AG04450 (cell line): ENCODE measurements at regions of chr9 and their contacts with region 1.

Region 1: DNA sequence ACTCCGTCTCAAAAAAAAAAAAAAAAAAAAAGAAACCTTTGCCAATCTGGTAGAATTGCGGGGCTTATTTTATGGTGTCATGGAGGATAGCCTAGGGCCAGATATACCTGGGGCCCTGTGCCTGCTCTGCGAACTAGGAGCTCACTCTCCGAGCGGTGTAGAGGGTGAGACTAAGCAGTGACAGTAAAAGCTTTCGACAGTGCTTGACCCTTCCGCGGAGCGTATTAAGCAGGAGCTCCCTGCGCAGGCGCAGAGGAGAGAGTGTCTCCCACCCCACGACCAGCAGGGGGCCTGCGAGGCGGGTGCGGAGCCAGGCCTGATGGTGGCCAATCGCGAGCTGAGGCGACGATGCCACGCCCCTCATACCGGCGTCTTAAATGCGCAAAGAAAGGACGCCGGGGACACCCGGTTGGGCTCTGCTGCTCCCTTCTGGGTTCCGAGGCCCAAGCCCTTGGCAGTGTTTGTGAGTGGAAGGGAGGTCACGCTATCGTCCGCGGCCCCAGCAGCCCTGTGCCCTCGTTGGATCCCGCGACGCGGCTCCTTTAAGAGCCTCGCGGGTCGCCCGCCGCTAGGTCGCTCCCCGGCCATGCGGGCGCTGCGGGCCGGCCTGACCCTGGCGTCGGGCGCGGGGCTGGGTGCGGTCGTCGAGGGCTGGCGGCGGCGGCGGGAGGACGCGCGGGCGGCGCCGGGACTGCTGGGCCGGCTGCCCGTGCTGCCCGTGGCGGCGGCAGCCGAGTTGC is at the start of gene ENDOG:
- DNase-seq: peak; percentile 88
- H3K4me3 ChIP-seq: peak within 1 kb of the TSS; percentile 80
- H3K27ac ChIP-seq: peak within 1 kb of the TSS; percentile 21
- H3K27me3 ChIP-seq: no peaks in the 10 kb centered on the region
- CTCF ChIP-seq: peak; percentile 98
- polyA plus RNA-seq, gene ENDOG: 6.3 and 7.8 TPM in 2 replicates

Region 2: DNA sequence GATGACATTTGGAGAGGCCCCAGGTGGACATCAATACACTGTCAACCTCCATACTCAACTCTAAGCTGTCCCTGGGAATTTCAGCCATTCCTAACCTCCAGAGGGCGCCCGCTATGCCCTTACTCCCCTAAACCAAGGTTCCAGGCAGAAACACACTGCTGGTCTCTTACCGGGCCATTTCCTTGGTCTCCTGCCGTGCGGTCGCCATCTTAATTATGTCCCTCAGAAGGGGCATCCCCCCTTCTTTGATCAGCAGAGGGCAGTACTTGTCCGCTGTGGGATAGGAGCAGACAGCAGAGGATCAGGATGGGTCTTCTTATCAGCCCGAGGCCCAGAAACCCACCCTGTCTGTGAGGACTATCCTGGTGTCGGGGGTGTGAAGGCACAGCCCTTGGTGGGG is 85.0 kb before region 1 on chr9:
- CTCF ChIA-PET with region 1: interaction called, 22 read pairs
- POLR2A ChIA-PET with region 1: no interaction called
- DNase-seq: peak; percentile 53
- H3K4me3 ChIP-seq: no peak overlapping the region
- H3K27ac ChIP-seq: no peak overlapping the region
- H3K27me3 ChIP-seq: no peaks in the 10 kb centered on the region
- CTCF ChIP-seq: peak; percentile 83

Region 3: DNA sequence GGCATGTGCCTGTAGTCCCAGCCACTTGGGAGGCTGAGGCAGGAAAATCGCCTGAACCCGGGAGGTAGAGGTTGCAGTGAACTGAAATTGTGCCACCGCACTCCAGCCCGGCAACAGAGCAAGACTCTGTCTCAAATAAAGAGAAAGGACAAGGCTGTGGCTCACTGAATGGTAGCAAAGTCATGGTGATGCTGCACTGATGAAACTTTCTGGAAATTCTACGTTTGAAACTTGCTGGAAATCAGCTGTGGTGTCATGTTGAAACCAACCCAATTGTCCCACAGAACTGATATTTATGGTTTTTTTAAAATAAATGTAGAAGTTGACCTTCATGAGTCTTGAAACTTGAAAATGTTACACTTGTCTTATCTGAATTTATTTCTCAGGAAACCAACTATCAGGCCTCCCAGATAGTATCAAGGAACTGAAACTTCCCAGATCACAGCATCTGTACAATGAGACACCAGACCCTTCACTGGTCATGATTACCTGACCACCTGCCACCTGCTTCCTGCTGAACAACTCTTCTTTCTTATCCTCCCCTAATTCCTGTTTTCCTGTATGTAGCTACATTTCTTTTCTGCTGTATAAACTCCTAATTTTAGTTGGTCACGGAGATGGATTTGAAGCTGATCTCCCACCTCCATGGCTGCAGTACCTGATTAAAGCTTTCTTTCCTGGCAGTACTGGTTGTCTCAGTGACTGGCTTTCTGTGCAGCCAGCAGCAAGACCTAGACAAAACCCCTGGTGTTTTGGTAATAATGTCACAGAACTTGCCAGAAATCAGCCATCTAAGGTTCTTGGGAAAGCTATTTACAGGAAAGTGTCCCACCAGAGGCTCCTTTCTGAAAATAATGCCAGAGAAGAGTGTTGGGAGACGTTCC is 36.8 kb before region 1 on chr9:
- CTCF ChIA-PET with region 1: interaction called, 11 read pairs
- POLR2A ChIA-PET with region 1: no interaction called
- DNase-seq: no peak
- H3K4me3 ChIP-seq: no peak overlapping the region
- H3K27ac ChIP-seq: no peak overlapping the region
- H3K27me3 ChIP-seq: no peaks in the 10 kb centered on the region
- CTCF ChIP-seq: no peak

Region 4: DNA sequence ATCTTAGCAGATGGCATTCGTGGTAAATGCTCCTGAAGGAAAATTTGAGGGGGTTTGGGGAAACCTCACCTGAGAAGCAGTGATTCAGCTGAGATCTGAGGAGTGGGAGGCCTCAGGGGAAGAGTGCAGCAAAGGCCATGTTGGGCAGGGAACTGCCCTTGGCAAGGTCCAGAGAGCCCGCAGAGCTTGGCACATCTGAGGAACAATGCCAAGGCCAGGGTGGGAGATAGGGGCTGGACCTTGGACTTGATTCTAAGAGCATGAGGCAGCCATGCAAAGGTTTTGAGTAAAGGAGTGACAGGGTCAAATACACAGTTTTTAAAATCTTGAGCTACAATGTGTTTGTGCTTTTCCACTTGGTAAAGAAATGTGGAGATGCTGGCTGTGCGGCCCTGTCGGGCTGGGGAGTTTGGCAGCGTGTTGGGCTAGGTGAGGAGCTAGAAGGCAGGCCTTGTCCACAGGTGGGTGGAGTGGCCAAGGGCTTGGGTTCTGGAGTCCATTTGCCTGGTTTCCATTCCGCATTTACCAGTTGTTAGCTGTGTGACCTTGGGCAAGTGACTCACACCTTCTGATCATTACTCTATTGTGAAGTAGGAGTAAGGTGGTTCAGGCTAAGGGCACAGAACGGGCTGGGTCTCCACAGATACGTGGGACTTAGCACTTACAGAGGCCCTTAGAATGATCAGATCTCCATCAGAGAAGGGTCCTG is 25.1 kb before region 1 on chr9:
- CTCF ChIA-PET with region 1: interaction called, 17 read pairs
- POLR2A ChIA-PET with region 1: no interaction called
- DNase-seq: no peak
- H3K4me3 ChIP-seq: no peak overlapping the region
- H3K27ac ChIP-seq: no peak overlapping the region
- H3K27me3 ChIP-seq: no peaks in the 10 kb centered on the region
- CTCF ChIP-seq: no peak

Region 5: DNA sequence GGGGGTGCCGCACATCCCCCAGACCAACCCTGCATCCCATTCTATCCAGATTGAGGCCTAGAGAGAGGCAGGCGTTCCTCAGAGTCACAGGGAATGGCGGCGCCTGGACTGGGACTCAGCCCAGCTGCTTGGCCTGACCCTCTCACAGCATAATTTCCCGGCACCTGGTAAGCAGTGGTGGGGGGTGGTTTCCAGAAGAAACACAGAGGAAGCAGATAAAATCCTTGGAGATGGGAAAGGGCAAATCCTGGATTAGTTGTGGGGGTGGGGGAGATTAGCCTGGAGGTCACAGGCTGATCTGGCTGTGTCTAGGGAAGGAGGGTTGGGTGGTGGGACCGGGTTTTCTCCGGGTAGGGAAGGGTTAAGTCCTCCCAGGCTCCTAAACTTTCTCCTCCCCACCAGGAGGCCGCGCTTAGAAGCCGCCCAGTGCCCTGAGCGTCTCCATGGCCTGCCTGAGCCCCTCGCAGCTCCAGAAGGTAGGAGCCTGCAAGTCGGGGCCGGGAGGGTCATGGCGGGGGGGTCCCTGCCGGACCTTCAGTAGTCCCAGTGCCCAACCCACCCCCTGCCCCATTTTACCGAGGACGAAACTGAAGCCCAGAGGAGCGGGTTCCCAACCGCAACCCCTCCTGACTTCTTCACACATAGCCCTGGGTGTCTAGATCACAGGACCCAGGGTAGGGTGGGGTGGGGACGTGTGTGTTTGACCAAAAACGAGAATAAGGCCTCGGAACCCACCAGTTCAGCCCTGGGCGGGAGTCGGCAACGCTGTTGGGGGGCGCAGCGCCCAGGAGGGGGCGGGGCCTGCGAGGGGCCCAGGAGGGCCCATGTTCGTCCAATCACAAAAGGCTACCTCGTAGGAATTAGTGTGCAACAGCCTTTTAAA is 103.9 kb after region 1 on chr9:
- CTCF ChIA-PET with region 1: interaction called, 19 read pairs
- POLR2A ChIA-PET with region 1: interaction called, 5 read pairs
- DNase-seq: no peak
- H3K4me3 ChIP-seq: peak overlapping the region; percentile 56
- H3K27ac ChIP-seq: peak overlapping the region; percentile 52
- H3K27me3 ChIP-seq: no peaks in the 10 kb centered on the region
- CTCF ChIP-seq: peak; percentile 7; the same call in 1 of the 2 replicates

Region 6: GRCh38 chr9:128947422-128948301 is 129.4 kb after region 1 on chr9 and contains the starts of genes DOLK and NUP188:
- CTCF ChIA-PET with region 1: interaction called, 11 read pairs
- POLR2A ChIA-PET with region 1: interaction called, 3 read pairs
- DNase-seq: peak; percentile 67
- H3K4me3 ChIP-seq: peak within 1 kb of the TSS; percentile 94
- H3K27ac ChIP-seq: peak within 1 kb of the TSS; percentile 91
- H3K27me3 ChIP-seq: no peaks in the 10 kb centered on the region
- CTCF ChIP-seq: no peak
- polyA plus RNA-seq, gene DOLK: 31.4 and 31.8 TPM in 2 replicates
- polyA plus RNA-seq, gene NUP188: 46.3 and 52.1 TPM in 2 replicates